ENCODE measurements at regions of chr5 and their contacts with region 1.

Region 1: DNA sequence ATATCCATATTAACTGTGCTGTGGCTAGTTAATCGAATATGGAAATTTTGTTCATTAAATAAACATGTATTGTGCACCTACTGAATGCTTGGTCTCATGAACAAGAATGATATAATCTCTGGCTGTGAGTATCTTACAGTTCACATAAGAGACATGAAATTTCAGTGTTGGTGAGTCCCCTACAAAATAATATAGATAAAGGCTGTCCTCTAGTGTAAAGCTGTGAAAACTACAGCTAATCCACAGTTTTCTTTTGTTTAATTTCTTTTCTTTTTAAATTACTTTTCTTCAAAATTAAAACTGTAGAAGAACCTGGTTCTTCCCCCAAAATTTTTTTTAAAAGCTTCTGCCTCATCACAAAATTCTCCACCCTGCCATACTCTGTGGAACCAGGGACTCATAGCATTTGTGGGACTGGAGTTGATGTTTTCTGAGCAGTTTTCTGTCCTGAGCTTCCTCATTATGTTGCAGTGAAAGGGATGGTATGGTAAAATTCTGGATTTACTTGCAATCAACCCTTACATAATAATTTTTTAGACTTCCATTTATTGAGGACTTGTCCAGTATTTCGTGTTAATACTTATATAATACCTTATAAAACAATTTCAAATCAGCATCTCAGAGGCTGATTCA is 135.0 kb downstream of the STK32A start:
- DNase-seq: no peak
- H3K4me3 ChIP-seq: no peak overlapping the region
- H3K27ac ChIP-seq: no peak overlapping the region
- H3K4me1 ChIP-seq: no peaks in the 10 kb centered on the region
- H3K27me3 ChIP-seq: peaks cover 3% of the 10 kb centered on the region
- CTCF ChIP-seq: peak; percentile 63 to 70

Region 2: GRCh38 chr5:146533260-146533857 is 836.5 kb before region 1 on chr5:
- CTCF ChIA-PET with region 1: interaction called, 6 read pairs
- dilution Hi-C with region 1: no loop called
- in situ Hi-C with region 1: loop called (anchors 25 kb)
- intact Hi-C with region 1: no loop called
- DNase-seq: peak; percentile 55
- H3K4me3 ChIP-seq: no peak overlapping the region
- H3K27ac ChIP-seq: no peak overlapping the region
- H3K4me1 ChIP-seq: peaks cover 2% of the 10 kb centered on the region
- H3K27me3 ChIP-seq: no peaks in the 10 kb centered on the region
- CTCF ChIP-seq: peak; percentile 89 to 94

Region 3: GRCh38 chr5:147098233-147098790 is 271.5 kb before region 1 on chr5:
- CTCF ChIA-PET with region 1: interaction called, 8 read pairs
- dilution Hi-C with region 1: no loop called
- in situ Hi-C with region 1: no loop called
- intact Hi-C with region 1: loop called (anchors 10 kb)
- DNase-seq: peak; percentile 22
- H3K4me3 ChIP-seq: no peak overlapping the region
- H3K27ac ChIP-seq: no peak overlapping the region
- H3K4me1 ChIP-seq: peaks cover 5% of the 10 kb centered on the region
- H3K27me3 ChIP-seq: no peaks in the 10 kb centered on the region
- CTCF ChIP-seq: peak; percentile 42 to 52

Region 4: GRCh38 chr5:147188200-147189108 is 181.4 kb before region 1 on chr5:
- CTCF ChIA-PET with region 1: interaction called, 12 read pairs
- dilution Hi-C with region 1: no loop called
- in situ Hi-C with region 1: no loop called
- intact Hi-C with region 1: no loop called
- DNase-seq: peak; percentile 33
- H3K4me3 ChIP-seq: no peak overlapping the region
- H3K27ac ChIP-seq: no peak overlapping the region
- H3K4me1 ChIP-seq: no peaks in the 10 kb centered on the region
- H3K27me3 ChIP-seq: no peaks in the 10 kb centered on the region
- CTCF ChIP-seq: peak; percentile 73 to 76

Region 5: GRCh38 chr5:147223948-147224791 is 145.7 kb before region 1 on chr5:
- CTCF ChIA-PET with region 1: interaction called, 11 read pairs
- dilution Hi-C with region 1: no loop called
- in situ Hi-C with region 1: loop called (anchors 10 kb)
- intact Hi-C with region 1: loop called (anchors 1 kb)
- DNase-seq: peak; percentile 21
- H3K4me3 ChIP-seq: no peak overlapping the region
- H3K27ac ChIP-seq: no peak overlapping the region
- H3K4me1 ChIP-seq: no peaks in the 10 kb centered on the region
- H3K27me3 ChIP-seq: peaks cover 2% of the 10 kb centered on the region
- CTCF ChIP-seq: peak; percentile 50 to 73

Region 6: GRCh38 chr5:147437161-147437596 is 67.3 kb after region 1 on chr5:
- CTCF ChIA-PET with region 1: no interaction called
- dilution Hi-C with region 1: loop called (anchors 10 kb)
- in situ Hi-C with region 1: no loop called
- intact Hi-C with region 1: no loop called
- DNase-seq: no peak
- H3K4me3 ChIP-seq: no peak overlapping the region
- H3K27ac ChIP-seq: no peak overlapping the region
- H3K4me1 ChIP-seq: no peaks in the 10 kb centered on the region
- H3K27me3 ChIP-seq: no peaks in the 10 kb centered on the region
- CTCF ChIP-seq: no peak

Region 7: GRCh38 chr5:147576646-147577535 is 207.0 kb after region 1 on chr5:
- CTCF ChIA-PET with region 1: no interaction called
- dilution Hi-C with region 1: no loop called
- in situ Hi-C with region 1: no loop called
- intact Hi-C with region 1: loop called (anchors 10 kb)
- DNase-seq: peak; percentile 32
- H3K4me3 ChIP-seq: no peak overlapping the region
- H3K27ac ChIP-seq: no peak overlapping the region
- H3K4me1 ChIP-seq: peaks cover 3% of the 10 kb centered on the region
- H3K27me3 ChIP-seq: peaks cover 2% of the 10 kb centered on the region
- CTCF ChIP-seq: peak; percentile 89 to 97

Measured in mammary epithelial cell (primary cell).